ENCODE measurements at regions of chr6 and their contacts with region 1.

Region 1: DNA sequence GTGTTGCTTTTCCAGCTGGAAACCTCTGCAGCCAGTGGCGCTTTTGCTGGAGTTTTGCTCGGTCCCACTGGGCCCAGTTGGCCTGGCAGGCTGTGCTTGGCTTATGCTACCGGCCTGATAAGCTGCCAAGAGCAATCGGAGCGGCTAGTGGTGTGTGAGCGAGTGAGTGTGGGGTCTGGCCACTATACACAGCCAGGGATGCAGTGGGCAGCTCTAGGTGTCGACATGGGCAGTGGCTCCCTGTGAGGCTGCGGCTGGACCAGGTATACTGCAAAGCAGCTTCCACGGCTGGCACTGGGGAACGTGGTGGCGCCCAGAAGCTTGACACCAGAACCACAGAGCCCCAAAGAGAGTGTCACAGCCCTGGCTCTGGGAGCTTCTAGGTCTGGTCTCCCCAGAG is 996.5 kb downstream of the GRIK2 start:
- DNase-seq: no peak
- H3K4me3 ChIP-seq: no peak overlapping the region
- H3K27ac ChIP-seq: no peak overlapping the region
- H3K4me1 ChIP-seq: no peaks in the 10 kb centered on the region
- H3K27me3 ChIP-seq: no peaks in the 10 kb centered on the region
- CTCF ChIP-seq: no peak
- POLR2A ChIP-seq: no peak

Region 2: GRCh38 chr6:100455230-100456124 is 1934.5 kb before region 1 on chr6:
- intact Hi-C with region 1: loop called (anchors 5 kb)
- DNase-seq: no peak
- H3K4me3 ChIP-seq: no peak overlapping the region
- H3K27ac ChIP-seq: no peak overlapping the region
- H3K4me1 ChIP-seq: no peaks in the 10 kb centered on the region
- H3K27me3 ChIP-seq: peaks cover 6 to 91% of the 10 kb centered on the region in 2 donors
- CTCF ChIP-seq: no peak
- POLR2A ChIP-seq: no peak

Measured in breast epithelium (tissue), 4 donors.